OCI-LY7 (cell line): ENCODE measurements at regions of chr1 and their contacts with region 1.

Region 1: GRCh38 chr1:25037174-25038074 is 107.3 kb upstream of the RUNX3 start:
- DNase-seq: peak; percentile 73
- H3K4me3 ChIP-seq: no peak overlapping the region
- H3K27ac ChIP-seq: no peak overlapping the region
- H3K4me1 ChIP-seq: peaks cover 24% of the 10 kb centered on the region
- CTCF ChIP-seq: peak; percentile 80

Region 2: GRCh38 chr1:24952413-24952841 is 85.0 kb before region 1 on chr1:
- CTCF ChIA-PET with region 1: no interaction called
- POLR2A ChIA-PET with region 1: interaction called, 3 read pairs
- intact Hi-C with region 1: loop called (anchors 1 kb)
- DNase-seq: peak; percentile 43
- H3K4me3 ChIP-seq: no peak overlapping the region
- H3K27ac ChIP-seq: no peak overlapping the region
- H3K4me1 ChIP-seq: peaks cover 63% of the 10 kb centered on the region
- CTCF ChIP-seq: peak; percentile 56; the same call in 1 of the 2 replicates

Region 3: GRCh38 chr1:24964811-24965570 is 72.4 kb before region 1 on chr1:
- CTCF ChIA-PET with region 1: interaction called, 4 read pairs
- POLR2A ChIA-PET with region 1: interaction called, 5 read pairs
- intact Hi-C with region 1: loop called (anchors 1 kb)
- DNase-seq: peak; percentile 91
- H3K4me3 ChIP-seq: peak overlapping the region; percentile 61
- H3K27ac ChIP-seq: peak overlapping the region; percentile 76
- H3K4me1 ChIP-seq: peaks cover 42% of the 10 kb centered on the region
- CTCF ChIP-seq: no peak